HepG2 (cell line): ENCODE measurements at regions of chr20 and their contacts with region 1.

Region 1: DNA sequence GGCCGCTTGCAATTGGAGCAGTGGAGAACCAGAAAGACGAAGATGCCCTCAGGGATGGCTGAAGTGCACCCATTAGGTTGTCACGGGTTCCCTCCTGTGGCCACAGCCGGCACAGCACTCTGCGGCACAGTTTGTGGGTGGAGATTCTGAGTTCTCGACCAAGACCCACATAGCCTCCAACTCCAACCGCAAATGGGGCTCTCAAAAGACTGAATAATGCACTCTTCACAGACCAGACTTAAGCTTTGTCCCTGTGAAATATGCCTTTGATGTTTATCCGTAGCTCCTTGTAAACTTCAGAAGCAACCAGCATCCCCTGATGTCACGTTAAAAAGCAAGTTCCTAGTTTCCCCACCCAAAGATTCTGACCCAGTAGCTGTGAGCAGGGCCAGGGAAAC is 934 bp upstream of the CST9 start:
- DNase-seq: peak; percentile 77
- ATAC-seq: peak; percentile 90
- H3K4me3 ChIP-seq: no peak overlapping the region
- H3K27ac ChIP-seq: no peak overlapping the region
- H3K4me1 ChIP-seq: peaks cover 29% of the 10 kb centered on the region
- H3K27me3 ChIP-seq: peaks cover 2 to 28% of the 10 kb centered on the region in 2 experiments; a peak in 4 of 5 replicates
- CTCF ChIP-seq: peak; percentile 99
- EP300 ChIP-seq: peak in 1 of 2 experiments; percentile 49; a peak in 1 of 4 replicates
- POLR2A ChIP-seq: no peak
- RAD21 ChIP-seq: peak; percentile 99

Region 2: DNA sequence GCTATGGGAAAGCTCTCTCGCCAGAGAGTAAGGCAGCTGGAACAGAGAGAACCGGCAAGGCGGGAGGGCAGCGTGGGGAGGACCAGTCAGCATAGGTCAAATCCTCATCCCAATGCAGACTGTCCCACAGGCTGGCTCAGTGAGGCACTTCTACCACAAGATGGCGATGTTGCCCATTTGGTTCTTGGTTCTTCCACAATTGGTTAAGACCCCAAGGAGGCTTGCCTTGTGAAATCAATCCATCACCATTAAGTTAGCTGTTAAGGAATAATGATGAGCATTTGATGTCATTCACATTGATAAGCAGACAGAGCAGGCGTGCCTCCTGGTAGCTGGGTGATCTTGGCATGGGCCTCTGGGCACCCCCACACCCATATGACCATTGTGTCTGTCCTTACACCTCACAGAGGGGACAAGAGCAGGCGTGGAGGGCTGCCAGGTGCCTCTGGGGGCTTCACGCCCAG is 164.8 kb before region 1 on chr20:
- CTCF ChIA-PET with region 1: interaction called, 71 read pairs
- POLR2A ChIA-PET with region 1: interaction called, 5 read pairs
- in situ Hi-C with region 1: loop called (anchors 5 kb)
- intact Hi-C with region 1: loop called (anchors 1 kb)
- DNase-seq: peak; percentile 84
- ATAC-seq: peak; percentile 88
- H3K4me3 ChIP-seq: no peak overlapping the region
- H3K27ac ChIP-seq: no peak overlapping the region
- H3K4me1 ChIP-seq: peaks cover 19% of the 10 kb centered on the region
- H3K27me3 ChIP-seq: peaks cover 0 to 11% of the 10 kb centered on the region in 2 experiments; a peak in 2 of 5 replicates
- CTCF ChIP-seq: peak; percentile 99
- EP300 ChIP-seq: no peak
- POLR2A ChIP-seq: no peak
- RAD21 ChIP-seq: peak; percentile 89

Region 3: GRCh38 chr20:23585808-23586734 is 20.6 kb before region 1 on chr20:
- CTCF ChIA-PET with region 1: no interaction called
- POLR2A ChIA-PET with region 1: interaction called, 4 read pairs
- in situ Hi-C with region 1: no loop called
- intact Hi-C with region 1: loop called (anchors 2 kb)
- DNase-seq: peak; percentile 96
- ATAC-seq: peak; percentile 89
- H3K4me3 ChIP-seq: peak overlapping the region; percentile 23 to 58 (median 30)
- H3K27ac ChIP-seq: peak overlapping the region; percentile 80
- H3K4me1 ChIP-seq: peaks cover 66% of the 10 kb centered on the region
- H3K27me3 ChIP-seq: no peaks in the 10 kb centered on the region
- CTCF ChIP-seq: peak; percentile 17; the same call in 1 of the 2 replicates
- EP300 ChIP-seq: peak in 1 of 2 experiments; percentile 93; a peak in 3 of 4 replicates
- POLR2A ChIP-seq: peak; percentile 45 to 75
- RAD21 ChIP-seq: no peak

Region 4: GRCh38 chr20:23629017-23629541 is 22.4 kb after region 1 on chr20:
- CTCF ChIA-PET with region 1: no interaction called
- POLR2A ChIA-PET with region 1: interaction called, 22 read pairs
- in situ Hi-C with region 1: no loop called
- intact Hi-C with region 1: no loop called
- DNase-seq: peak; percentile 98
- ATAC-seq: peak; percentile 87
- H3K4me3 ChIP-seq: peak overlapping the region in 1 of 3 experiments; percentile 39; a peak in 1 of 6 replicates
- H3K27ac ChIP-seq: peak overlapping the region; percentile 70
- H3K4me1 ChIP-seq: peaks cover 80% of the 10 kb centered on the region
- H3K27me3 ChIP-seq: no peaks in the 10 kb centered on the region
- CTCF ChIP-seq: peak; percentile 31
- EP300 ChIP-seq: peak; percentile 76 to 80; a peak in 3 of 4 replicates
- POLR2A ChIP-seq: peak; percentile 40 to 50; a peak in 1 of 4 replicates
- RAD21 ChIP-seq: no peak; the same call in 1 of the 2 replicates

Region 5: DNA sequence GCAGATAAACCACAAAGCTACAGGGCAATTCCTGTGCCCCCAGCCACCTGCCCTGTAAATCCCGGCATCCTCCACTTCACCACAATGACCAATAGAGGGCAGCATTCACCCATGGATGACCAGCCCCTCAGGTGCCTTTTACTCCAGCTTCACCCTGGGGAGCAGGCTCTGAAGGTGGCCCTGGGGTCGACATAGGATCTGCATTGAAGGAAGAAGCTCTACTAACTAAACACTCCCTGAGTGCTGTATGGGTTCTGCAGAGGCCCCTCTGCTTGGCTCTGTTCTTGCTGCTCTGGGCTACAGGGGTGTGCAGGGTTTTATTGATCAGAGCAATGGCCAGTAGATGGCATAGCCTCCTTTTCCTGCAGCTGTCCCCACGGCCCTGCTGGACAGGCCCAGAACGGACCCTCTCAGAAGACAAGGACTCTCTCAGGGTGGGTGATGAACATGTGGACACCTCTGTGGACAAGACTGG is 61.9 kb after region 1 on chr20:
- CTCF ChIA-PET with region 1: interaction called, 10 read pairs
- POLR2A ChIA-PET with region 1: no interaction called
- in situ Hi-C with region 1: no loop called
- intact Hi-C with region 1: loop called (anchors 2 kb)
- DNase-seq: peak; percentile 84
- ATAC-seq: peak; percentile 95
- H3K4me3 ChIP-seq: no peak overlapping the region
- H3K27ac ChIP-seq: no peak overlapping the region
- H3K4me1 ChIP-seq: peaks cover 22% of the 10 kb centered on the region
- H3K27me3 ChIP-seq: no peaks in the 10 kb centered on the region
- CTCF ChIP-seq: peak; percentile 99
- EP300 ChIP-seq: no peak
- POLR2A ChIP-seq: no peak
- RAD21 ChIP-seq: peak; percentile 94

Region 6: GRCh38 chr20:23727016-23727415 is 120.4 kb after region 1 on chr20:
- CTCF ChIA-PET with region 1: no interaction called
- POLR2A ChIA-PET with region 1: no interaction called
- in situ Hi-C with region 1: no loop called
- intact Hi-C with region 1: no loop called
- DNase-seq: no peak
- ATAC-seq: no peak
- H3K4me3 ChIP-seq: no peak overlapping the region
- H3K27ac ChIP-seq: no peak overlapping the region
- H3K4me1 ChIP-seq: no peaks in the 10 kb centered on the region
- H3K27me3 ChIP-seq: no peaks in the 10 kb centered on the region
- CTCF ChIP-seq: no peak
- EP300 ChIP-seq: no peak
- POLR2A ChIP-seq: no peak
- RAD21 ChIP-seq: no peak